ENCODE measurements at regions of chr2 and their contacts with region 1.

Region 1: DNA sequence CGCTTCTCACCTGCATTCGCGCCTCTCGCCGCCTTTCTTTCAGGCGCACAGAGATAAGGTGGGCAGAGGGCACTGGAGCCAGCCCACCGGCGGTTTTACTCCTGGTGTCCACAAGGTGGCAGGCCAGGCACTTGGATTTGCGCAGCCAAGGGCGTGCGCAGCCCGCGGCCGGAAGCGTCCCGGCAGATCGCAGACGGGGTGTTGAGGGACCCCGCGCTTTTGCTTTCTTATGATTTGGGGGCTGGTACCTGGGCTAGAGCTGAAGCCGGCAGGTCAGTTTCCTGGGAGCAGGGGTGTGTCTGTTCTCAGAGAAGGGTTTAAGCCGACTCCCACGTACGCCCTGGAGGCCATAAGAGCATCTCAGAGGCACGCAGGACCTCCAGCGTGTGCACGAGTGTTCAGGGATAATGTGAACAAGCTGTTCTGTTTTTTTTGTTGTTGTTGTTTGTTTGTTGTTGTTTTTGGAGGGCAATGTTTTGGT is 305.6 kb upstream of the CXCR4 start:
- DNase-seq: peak; percentile 94
- H3K4me3 ChIP-seq: peak overlapping the region; percentile 26 to 69 (median 44)
- H3K27ac ChIP-seq: no peak overlapping the region
- H3K4me1 ChIP-seq: peaks cover 0 to 17% (median 13%) of the 10 kb centered on the region in 6 donors
- H3K27me3 ChIP-seq: peaks cover 0 to 39% (median 0%) of the 10 kb centered on the region in 7 donors
- CTCF ChIP-seq: peak; percentile 80 to 95 (median 86)
- POLR2A ChIP-seq: no peak

Region 2: DNA sequence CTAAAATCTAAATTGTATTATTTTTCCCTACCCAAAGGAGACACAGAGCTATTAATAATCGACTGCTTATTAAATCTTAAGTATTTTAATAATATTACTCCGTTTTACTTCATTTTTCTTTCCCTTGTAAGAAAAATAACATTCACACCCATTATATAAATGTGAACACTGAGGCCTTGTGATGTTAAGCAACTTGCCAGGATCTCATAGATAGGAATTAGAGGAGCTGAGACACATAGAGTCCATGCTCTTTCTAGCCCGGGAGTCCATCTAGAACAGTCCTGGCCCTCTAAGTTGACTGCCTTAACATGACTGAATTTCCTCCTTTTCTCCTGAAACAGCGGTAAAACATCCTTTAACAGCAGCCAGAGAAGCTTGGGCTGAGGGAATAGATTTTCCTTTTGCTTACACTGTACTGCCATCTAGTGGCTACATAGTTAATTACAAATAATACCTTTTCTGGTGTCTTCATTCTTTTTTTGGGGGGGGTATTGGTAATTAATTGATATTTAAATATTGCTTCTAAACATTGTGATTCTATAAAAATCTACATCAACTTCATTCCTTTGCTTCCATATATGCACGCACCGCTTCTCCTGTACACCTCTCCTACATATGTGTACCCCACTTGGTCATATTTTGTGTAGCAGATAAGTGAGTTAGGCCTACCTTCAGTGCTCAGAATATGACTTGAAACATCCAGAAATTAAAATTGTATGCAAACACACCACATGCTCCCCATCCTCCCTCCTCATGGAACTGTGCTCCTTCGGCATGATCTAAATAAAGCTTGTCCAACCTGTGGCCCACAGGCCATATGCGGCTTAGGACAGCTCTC is 1414.9 kb after region 1 on chr2:
- intact Hi-C with region 1: loop called (anchors 5 kb)
- DNase-seq: no peak
- H3K4me3 ChIP-seq: no peak overlapping the region
- H3K27ac ChIP-seq: no peak overlapping the region
- H3K4me1 ChIP-seq: no peaks in the 10 kb centered on the region
- H3K27me3 ChIP-seq: no peaks in the 10 kb centered on the region
- CTCF ChIP-seq: peak in 10 of 11 experiments; percentile 25 to 63 (median 58)
- POLR2A ChIP-seq: no peak